Activated CD4-positive, alpha-beta memory T cell treated with anti-CD3 and anti-CD28 coated beads for 36 hours (primary cell): ENCODE measurements at regions of chr5 and their contacts with region 1.

Region 1: DNA sequence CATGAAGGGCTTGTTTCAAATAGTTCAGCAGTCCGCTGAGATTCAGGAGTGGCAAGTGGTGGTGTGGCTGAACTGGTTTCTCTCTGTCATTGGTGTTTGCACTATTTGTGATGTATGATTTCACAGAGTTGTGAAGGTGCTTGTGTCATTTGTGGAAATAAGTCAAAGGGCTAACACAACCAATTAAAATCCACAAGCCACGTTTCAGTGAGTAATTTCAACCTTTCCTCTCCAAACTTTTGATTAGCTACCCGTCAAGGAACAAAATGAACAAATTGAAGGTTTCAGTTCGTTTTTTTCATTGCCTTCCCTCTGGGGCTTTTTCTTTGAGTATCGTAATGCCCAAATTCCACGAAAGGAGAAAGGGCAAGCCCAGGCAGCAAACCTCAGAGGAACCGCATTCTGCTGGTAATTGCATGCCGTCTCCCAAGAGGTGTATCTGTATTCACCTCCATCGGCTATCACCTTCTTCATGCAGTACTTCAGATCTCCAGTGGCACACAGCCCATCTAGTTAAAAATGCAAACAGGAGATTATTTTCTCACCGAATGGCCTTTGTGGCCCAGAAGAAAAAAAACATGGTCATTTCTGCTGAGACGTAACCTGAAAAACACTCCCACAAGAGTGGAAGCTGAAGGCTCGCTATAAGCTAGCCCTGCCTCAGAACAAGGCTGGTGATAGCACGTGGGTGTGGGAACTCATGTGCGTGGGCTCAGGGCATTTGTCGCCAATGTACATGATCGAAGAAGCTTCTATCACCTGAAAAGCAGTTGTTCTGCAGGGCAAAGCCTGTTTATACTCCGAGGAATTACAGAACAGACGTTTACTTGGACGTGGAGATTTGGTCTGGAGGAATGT is 197.1 kb downstream of the NR3C1 start:
- DNase-seq: peak; percentile 65
- H3K4me3 Mint-ChIP-seq: peak overlapping the region; percentile 5
- H3K27ac Mint-ChIP-seq: peak overlapping the region; percentile 73
- H3K4me1 Mint-ChIP-seq: peaks cover 35% of the 10 kb centered on the region
- H3K27me3 Mint-ChIP-seq: peaks cover 2% of the 10 kb centered on the region

Region 2: DNA sequence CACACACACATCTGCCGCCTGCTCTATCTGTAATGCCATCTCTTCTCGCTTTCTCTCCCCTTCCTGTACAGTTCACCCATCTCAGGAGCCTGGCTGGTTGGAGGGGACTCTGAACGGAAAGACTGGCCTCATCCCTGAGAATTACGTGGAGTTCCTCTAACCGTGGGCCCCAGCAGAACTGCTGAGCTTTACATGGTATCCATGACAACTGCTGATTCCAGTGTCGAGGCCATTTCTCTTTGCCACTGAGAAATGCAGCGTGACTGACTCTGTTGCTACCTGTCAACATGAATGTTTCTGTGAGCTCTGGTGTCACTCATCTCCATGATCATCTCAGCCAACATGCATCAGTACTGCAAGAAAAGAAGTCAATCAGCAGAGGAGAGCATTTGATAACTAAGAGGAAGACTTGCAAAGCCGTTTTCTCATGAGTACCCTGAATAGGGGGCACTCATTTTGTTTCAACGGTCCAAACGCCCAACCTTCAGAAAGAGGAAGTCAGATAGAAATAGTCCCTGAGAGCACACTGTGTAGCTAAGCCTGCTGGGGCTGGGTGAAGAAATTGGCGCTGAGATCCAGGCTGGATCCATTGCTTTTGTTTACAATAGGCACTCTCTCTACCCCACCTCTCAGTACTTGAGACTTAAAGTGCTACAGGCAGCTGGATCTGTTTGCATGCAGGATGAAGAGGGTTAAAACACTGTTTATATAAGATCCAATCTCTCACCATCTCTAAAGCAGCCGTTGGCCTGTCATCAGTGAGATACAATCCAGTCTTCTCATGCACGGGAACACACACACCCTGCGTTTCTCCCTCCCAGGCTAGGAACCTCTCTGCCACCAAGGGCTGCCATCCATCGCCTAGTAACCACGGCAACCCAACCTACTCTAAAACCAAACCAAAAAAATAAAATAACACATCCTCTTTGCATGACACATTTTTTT is 16.1 kb after region 1 on chr5:
- CTCF ChIA-PET with region 1: no interaction called
- POLR2A ChIA-PET with region 1: interaction called, 5 read pairs
- intact Hi-C with region 1: loop called (anchors 1 kb)
- DNase-seq: peak; percentile 75
- H3K4me3 Mint-ChIP-seq: peak overlapping the region; percentile 11
- H3K27ac Mint-ChIP-seq: peak overlapping the region; percentile 69
- H3K4me1 Mint-ChIP-seq: peaks cover 51% of the 10 kb centered on the region
- H3K27me3 Mint-ChIP-seq: no peaks in the 10 kb centered on the region

Region 3: GRCh38 chr5:143386725-143387124 is 180.3 kb after region 1 on chr5:
- CTCF ChIA-PET with region 1: no interaction called
- POLR2A ChIA-PET with region 1: no interaction called
- intact Hi-C with region 1: no loop called
- DNase-seq: peak; percentile 33
- H3K4me3 Mint-ChIP-seq: no peak overlapping the region
- H3K27ac Mint-ChIP-seq: no peak overlapping the region
- H3K4me1 Mint-ChIP-seq: peaks cover 76% of the 10 kb centered on the region
- H3K27me3 Mint-ChIP-seq: no peaks in the 10 kb centered on the region